GM12878 (cell line): ENCODE measurements at regions of chr17 and their contacts with region 1.

Region 1: GRCh38 chr17:47315451-47316266 is 8.1 kb upstream of the EFCAB13 start:
- DNase-seq: peak; percentile 48
- ATAC-seq: peak; percentile 89
- H3K4me3 ChIP-seq: no peak overlapping the region
- H3K27ac ChIP-seq: no peak overlapping the region
- H3K4me1 ChIP-seq: no peaks in the 10 kb centered on the region
- H3K27me3 ChIP-seq: no peaks in the 10 kb centered on the region
- CTCF ChIP-seq: peak; percentile 68 to 93 (median 80); a peak in 5 of 6 replicates
- EP300 ChIP-seq: no peak
- POLR2A ChIP-seq: no peak
- RAD21 ChIP-seq: peak; percentile 99

Region 2: GRCh38 chr17:46878055-46878454 is 437.6 kb before region 1 on chr17:
- CTCF ChIA-PET with region 1: no interaction called
- POLR2A ChIA-PET with region 1: no interaction called
- RAD21 ChIA-PET with region 1: no interaction called
- SMC1A ChIA-PET with region 1: no interaction called
- in situ Hi-C with region 1: no loop called
- intact Hi-C with region 1: no loop called
- DNase-seq: no peak
- ATAC-seq: no peak
- H3K4me3 ChIP-seq: no peak overlapping the region
- H3K27ac ChIP-seq: no peak overlapping the region
- H3K4me1 ChIP-seq: no peaks in the 10 kb centered on the region
- H3K27me3 ChIP-seq: no peaks in the 10 kb centered on the region
- CTCF ChIP-seq: no peak
- EP300 ChIP-seq: no peak
- POLR2A ChIP-seq: no peak
- RAD21 ChIP-seq: no peak

Region 3: DNA sequence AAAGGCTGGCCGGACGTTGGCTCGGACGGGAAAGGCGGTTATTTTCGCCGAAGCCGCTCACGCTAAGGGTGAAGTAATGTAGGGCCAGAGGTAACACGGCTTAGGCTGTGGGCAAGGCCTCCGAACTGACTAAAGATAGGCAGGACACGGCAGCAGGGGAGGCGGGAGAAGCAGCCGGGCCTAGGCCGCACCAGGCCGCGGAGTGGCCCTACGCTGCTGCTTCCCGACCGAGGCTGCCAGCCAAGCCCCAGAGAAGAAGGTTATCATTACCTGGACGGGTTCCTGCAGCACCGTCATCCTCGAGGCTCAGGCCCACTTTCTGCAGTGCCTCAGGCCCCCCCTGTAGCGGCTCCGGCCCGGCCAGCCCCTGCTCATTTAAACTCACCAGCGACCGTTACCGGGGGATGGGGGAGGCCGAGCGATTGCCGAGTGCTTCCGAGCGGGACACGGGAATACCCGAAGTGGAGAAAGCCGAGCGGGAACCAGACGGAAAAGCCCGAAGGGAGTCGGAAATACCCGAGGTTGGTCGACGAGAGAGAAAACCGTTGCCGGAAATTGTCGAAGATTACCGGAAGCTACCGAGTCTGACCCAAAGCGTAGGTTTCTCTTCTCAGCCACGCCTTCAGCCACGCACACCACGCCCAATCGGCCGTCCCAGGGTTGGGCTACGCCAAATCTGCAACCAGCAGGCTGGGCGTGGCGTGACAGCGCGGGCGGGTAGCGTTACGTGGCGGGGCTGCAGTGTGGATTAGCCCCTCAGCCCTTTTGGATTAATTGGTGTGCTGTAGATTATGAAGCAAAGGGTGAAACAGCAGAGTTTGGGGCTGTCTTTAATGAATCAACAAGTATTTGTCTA is 126.6 kb before region 1 on chr17 and contains the start of gene CDC27:
- CTCF ChIA-PET with region 1: interaction called, 10 read pairs
- POLR2A ChIA-PET with region 1: no interaction called
- RAD21 ChIA-PET with region 1: no interaction called
- SMC1A ChIA-PET with region 1: interaction called, 10 read pairs
- in situ Hi-C with region 1: no loop called
- intact Hi-C with region 1: no loop called
- DNase-seq: peak; percentile 88
- ATAC-seq: peak; percentile 93
- H3K4me3 ChIP-seq: peak within 1 kb of the TSS; percentile 89
- H3K27ac ChIP-seq: peak within 1 kb of the TSS; percentile 96
- H3K4me1 ChIP-seq: peaks cover 4% of the 10 kb centered on the region
- H3K27me3 ChIP-seq: no peaks in the 10 kb centered on the region
- CTCF ChIP-seq: no peak
- EP300 ChIP-seq: no peak
- POLR2A ChIP-seq: peak; percentile 73
- RAD21 ChIP-seq: no peak
- polyA plus RNA-seq, gene CDC27: 23.2 to 27.2 TPM

Region 4: DNA sequence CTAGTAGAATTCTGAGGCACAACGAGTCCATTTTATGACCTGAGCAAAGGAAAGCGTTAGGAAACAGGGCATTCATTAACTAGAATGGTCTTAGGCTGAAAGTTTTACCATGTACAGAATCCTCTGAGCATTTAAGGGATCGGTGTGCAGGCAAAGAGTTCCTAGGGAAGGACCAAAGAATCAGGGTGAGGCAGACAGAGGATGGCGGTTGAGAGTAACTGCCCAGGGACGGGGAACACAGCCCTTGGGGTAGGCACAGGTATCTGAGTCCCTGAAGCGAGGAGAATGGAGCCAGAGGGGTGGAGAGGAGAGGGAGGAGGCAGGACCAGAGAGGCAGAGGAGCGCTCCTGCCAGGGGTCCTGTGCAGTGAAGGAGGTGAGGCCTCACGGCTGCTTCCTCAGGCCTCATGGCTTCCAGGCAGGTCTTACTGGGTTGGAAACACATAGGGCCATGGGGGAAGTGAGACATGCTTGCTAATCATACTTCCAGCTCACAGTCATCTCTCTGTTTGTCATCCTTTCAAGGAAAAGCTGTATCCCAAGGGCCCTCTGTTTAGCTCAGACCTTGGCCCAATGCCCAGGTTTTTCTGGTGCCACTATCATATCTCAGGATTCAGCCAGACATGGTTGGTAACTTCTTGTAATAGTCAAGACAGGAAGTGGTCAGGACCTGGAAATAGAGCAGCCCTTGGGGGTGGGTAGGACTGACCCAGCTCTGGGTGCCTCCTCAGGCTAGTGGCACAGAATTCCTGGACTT is 75.9 kb before region 1 on chr17:
- CTCF ChIA-PET with region 1: interaction called, 19 read pairs
- POLR2A ChIA-PET with region 1: interaction called, 4 read pairs
- RAD21 ChIA-PET with region 1: interaction called, 6 read pairs
- SMC1A ChIA-PET with region 1: interaction called, 22 read pairs
- in situ Hi-C with region 1: loop called (anchors 5 kb)
- intact Hi-C with region 1: no loop called
- DNase-seq: peak; percentile 40
- ATAC-seq: peak; percentile 88
- H3K4me3 ChIP-seq: no peak overlapping the region
- H3K27ac ChIP-seq: no peak overlapping the region
- H3K4me1 ChIP-seq: peaks cover 10% of the 10 kb centered on the region
- H3K27me3 ChIP-seq: no peaks in the 10 kb centered on the region
- CTCF ChIP-seq: no peak
- EP300 ChIP-seq: no peak
- POLR2A ChIP-seq: no peak
- RAD21 ChIP-seq: no peak

Region 5: GRCh38 chr17:47265983-47266541 is 49.6 kb before region 1 on chr17:
- CTCF ChIA-PET with region 1: interaction called, 3 read pairs
- POLR2A ChIA-PET with region 1: interaction called, 3 read pairs
- RAD21 ChIA-PET with region 1: no interaction called
- SMC1A ChIA-PET with region 1: interaction called, 14 read pairs
- in situ Hi-C with region 1: no loop called
- intact Hi-C with region 1: no loop called
- DNase-seq: no peak
- ATAC-seq: peak; percentile 42
- H3K4me3 ChIP-seq: no peak overlapping the region
- H3K27ac ChIP-seq: no peak overlapping the region
- H3K4me1 ChIP-seq: 0 out of 2 replicates have a peak, but pooled peaks cover 3% of the 10 kb centered on the region
- H3K27me3 ChIP-seq: no peaks in the 10 kb centered on the region
- CTCF ChIP-seq: no peak
- EP300 ChIP-seq: no peak
- POLR2A ChIP-seq: no peak
- RAD21 ChIP-seq: no peak

Region 6: GRCh38 chr17:47291238-47291873 is 24.3 kb before region 1 on chr17:
- CTCF ChIA-PET with region 1: interaction called, 65 read pairs
- POLR2A ChIA-PET with region 1: interaction called, 13 read pairs
- RAD21 ChIA-PET with region 1: interaction called, 42 read pairs
- SMC1A ChIA-PET with region 1: interaction called, 93 read pairs
- in situ Hi-C with region 1: no loop called
- intact Hi-C with region 1: loop called (anchors 1 kb)
- DNase-seq: no peak
- ATAC-seq: no peak
- H3K4me3 ChIP-seq: no peak overlapping the region
- H3K27ac ChIP-seq: no peak overlapping the region
- H3K4me1 ChIP-seq: peaks cover 21% of the 10 kb centered on the region
- H3K27me3 ChIP-seq: no peaks in the 10 kb centered on the region
- CTCF ChIP-seq: no peak
- EP300 ChIP-seq: no peak
- POLR2A ChIP-seq: no peak
- RAD21 ChIP-seq: no peak

Region 7: DNA sequence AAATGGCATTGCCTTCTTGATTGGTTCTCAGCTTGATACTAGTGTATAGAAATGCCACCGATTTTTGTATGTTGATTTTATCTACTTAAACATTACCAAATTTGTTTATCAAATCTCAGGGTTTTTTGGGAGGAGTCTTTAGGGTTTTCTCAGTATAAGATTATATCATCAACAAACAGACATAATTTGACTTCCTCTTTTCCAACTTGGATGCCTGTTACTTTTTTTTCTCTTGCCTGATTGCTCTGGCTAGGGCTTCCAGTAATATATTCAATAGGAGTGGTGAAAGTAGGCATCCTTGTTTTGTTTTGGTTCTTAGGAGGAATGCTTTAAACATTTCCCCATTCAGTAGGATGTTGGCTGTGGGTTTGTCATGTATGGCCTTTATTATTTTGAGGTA is 37.2 kb after region 1 on chr17:
- CTCF ChIA-PET with region 1: no interaction called
- POLR2A ChIA-PET with region 1: no interaction called
- RAD21 ChIA-PET with region 1: no interaction called
- SMC1A ChIA-PET with region 1: no interaction called
- in situ Hi-C with region 1: no loop called
- intact Hi-C with region 1: no loop called
- DNase-seq: no peak
- ATAC-seq: no peak
- H3K4me3 ChIP-seq: no peak overlapping the region
- H3K27ac ChIP-seq: no peak overlapping the region
- H3K4me1 ChIP-seq: no peaks in the 10 kb centered on the region
- H3K27me3 ChIP-seq: no peaks in the 10 kb centered on the region
- CTCF ChIP-seq: no peak
- EP300 ChIP-seq: no peak
- POLR2A ChIP-seq: no peak
- RAD21 ChIP-seq: no peak

Region 8: DNA sequence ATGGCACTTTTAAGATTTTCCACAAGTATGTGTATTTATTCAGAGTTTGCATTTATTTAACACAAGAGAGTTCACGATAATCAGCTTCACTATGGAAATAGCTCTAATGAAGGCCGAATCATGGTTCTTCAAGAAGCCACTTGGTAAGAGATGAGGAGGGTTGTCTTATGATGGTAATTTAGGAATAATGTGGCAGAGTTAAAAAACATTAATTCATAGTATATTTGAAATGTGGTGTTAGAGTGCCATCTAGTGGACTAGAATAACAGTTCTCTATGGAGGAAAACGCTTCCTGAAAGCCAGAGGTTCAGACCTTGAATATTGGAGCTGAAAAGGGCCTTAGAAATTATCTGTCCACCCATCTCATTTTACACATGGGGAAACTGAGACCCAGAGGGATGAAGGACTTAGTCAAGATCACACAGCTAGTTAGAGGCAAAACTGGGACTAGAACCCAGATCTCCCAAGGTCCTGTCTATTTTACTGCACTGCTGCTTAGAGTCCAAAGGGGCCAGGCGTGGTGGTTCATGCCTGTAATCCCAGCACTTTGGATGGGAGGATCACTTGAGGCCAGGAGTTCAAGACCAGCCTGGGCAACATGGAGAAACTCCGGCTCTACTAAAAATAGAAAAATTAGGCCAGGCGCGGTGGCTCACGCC is 300.2 kb after region 1 on chr17:
- CTCF ChIA-PET with region 1: interaction called, 24 read pairs
- POLR2A ChIA-PET with region 1: no interaction called
- RAD21 ChIA-PET with region 1: interaction called, 5 read pairs
- SMC1A ChIA-PET with region 1: interaction called, 15 read pairs
- in situ Hi-C with region 1: loop called (anchors 10 kb)
- intact Hi-C with region 1: loop called (anchors 5 kb)
- DNase-seq: peak; percentile 16
- ATAC-seq: peak; percentile 83
- H3K4me3 ChIP-seq: no peak overlapping the region
- H3K27ac ChIP-seq: no peak overlapping the region
- H3K4me1 ChIP-seq: no peaks in the 10 kb centered on the region
- H3K27me3 ChIP-seq: no peaks in the 10 kb centered on the region
- CTCF ChIP-seq: peak; percentile 38 to 63 (median 61); a peak in 5 of 6 replicates
- EP300 ChIP-seq: no peak
- POLR2A ChIP-seq: no peak
- RAD21 ChIP-seq: peak; percentile 71